Thyroid gland (tissue), 4 donors: ENCODE measurements at regions of chr1 and their contacts with region 1.

Region 1: DNA sequence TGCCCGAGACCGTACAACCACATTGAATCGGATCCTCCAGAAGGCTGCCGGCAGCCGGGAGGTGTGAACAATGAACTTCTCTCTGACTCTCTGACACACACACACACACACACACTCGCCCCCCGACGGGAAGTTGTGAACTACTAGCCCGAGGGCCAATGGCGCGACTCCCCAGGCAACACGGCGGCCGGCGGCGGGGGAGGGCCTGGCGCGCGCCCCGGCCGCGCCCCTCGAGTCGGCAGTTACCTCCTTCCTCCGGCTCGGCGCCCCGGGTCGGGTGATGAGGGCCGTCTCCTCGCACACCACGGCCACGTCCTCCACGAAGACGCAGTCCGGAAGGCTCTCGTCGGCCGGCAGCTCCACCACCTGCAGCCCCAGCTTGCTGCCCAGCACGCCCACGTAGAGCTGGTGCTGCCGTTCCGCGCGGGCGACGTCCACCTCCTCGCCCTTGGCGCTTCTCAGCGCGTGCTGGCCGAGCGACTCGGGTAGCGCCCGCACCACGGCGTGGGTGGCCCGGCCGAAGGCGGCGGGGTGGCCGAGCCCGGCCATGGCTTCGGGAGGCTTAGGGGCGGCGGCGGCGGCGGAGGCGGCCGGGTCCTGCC is 361 bp downstream of the DDAH1 start:
- DNase-seq: peak; percentile 75 to 79
- H3K4me3 ChIP-seq: peak overlapping the region; percentile 68 to 87 (median 73)
- H3K27ac ChIP-seq: peak overlapping the region; percentile 43 to 87 (median 85)
- H3K4me1 ChIP-seq: peaks cover 16 to 19% of the 10 kb centered on the region in 2 donors
- H3K27me3 ChIP-seq: no peaks in the 10 kb centered on the region
- CTCF ChIP-seq: no peak
- POLR2A ChIP-seq: peak; percentile 15 to 68

Region 2: DNA sequence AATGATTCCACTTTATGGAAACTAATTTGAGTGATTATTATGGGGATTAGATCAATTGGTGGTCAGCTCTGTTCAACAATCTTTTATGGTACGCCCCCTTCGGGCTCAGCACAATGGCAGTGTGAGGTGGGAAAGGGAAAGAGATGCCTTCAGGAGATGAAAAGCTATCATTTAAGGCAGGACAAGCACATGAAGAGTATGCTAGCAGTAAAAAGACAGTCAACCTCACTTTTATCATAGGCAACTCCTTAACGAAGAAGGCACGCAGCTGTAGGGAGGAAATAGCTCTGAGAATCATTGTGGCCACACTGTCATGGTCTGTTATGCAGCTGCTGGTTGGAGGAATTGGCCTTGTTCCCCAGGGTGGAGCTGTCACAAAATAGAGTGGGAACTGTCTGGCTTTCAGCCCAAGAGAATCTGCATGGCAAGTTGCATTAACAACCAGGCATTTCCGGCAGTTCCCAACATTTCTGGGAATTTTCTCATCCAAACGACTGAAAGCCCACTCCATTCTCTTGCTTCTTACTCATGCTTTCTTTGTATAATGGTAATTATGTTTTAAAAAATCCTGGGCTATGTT is 133.8 kb before region 1 on chr1:
- intact Hi-C with region 1: loop called (anchors 10 kb)
- DNase-seq: peak; percentile 15 to 27
- H3K4me3 ChIP-seq: no peak overlapping the region
- H3K27ac ChIP-seq: peak overlapping the region in 2 of 3 donors; percentile 51 to 58
- H3K4me1 ChIP-seq: peaks cover 14 to 28% of the 10 kb centered on the region in 2 donors
- H3K27me3 ChIP-seq: no peaks in the 10 kb centered on the region
- CTCF ChIP-seq: no peak
- POLR2A ChIP-seq: no peak

Region 3: DNA sequence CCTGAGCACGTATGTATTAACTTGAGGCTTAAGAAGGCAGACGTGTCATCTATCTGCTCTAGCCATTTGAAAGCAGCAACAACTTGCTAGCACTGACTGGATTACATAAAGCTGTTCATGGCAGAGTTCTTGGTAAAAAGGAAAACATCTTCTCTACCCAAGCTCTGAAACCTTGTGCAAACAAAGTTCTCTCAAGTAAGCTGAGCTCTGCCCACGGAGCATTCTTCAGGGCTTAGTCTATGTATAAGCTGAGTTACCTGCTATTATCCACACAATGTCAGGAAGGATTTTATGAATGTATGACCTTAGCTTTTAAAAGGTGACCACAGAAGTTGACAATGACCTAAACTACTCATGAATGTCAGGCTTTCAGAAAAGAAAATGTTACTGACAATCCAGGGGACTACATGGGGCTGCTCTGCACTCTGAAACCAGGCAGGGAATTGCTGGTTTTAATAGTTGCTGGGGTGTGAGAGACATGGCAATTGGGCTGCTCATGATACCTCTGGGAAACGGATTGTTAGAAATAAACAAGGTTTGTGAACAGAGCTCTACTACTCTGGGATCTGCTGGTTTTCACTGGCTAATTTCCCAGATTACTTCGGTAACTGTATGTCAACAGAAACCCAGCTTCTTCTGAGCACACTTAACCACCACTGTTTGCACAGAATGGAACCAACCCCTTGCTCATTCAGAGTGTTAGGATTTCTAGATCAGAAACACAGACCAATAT is 86.4 kb after region 1 on chr1:
- intact Hi-C with region 1: no loop called
- DNase-seq: peak; percentile 57 to 64
- H3K4me3 ChIP-seq: no peak overlapping the region
- H3K27ac ChIP-seq: peak overlapping the region; percentile 78 to 94 (median 84)
- H3K4me1 ChIP-seq: peaks cover 21 to 32% of the 10 kb centered on the region in 2 donors
- H3K27me3 ChIP-seq: no peaks in the 10 kb centered on the region
- CTCF ChIP-seq: no peak
- POLR2A ChIP-seq: peak in 1 of 2 donors; percentile 43